T-cell (primary cell): ENCODE measurements at regions of chr16 and their contacts with region 1.

Region 1: DNA sequence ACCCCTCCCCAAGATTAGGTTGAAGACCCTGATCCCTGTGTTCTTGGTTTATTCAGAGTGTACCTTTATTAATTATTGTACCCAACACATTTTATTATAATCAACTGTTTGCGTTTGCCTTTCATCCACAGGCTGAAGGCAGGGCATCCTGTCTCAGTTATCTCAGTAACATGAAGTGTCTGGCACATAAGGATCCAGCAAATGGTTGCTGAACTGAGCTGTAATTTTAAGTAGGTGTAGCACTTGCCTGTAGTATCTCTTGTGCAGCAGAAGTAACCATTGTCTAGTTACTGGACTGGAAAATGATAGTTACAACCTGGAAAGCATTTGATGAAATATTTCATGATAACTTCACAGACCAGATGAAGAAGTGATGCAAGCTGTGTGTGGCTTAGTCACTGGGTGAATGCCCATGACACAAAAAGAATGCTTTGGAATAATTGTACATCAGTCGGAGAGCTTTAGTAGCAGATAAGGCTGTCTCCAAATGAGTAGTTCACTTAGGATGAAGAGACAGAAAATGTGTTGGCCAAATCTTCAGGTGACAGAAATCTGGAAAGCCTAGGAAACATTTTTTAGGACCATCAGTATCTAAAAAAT is 56.6 kb downstream of the ESRP2 start:
- DNase-seq: no peak
- ATAC-seq: no peak
- H3K4me3 ChIP-seq: no peak overlapping the region
- H3K4me3 Mint-ChIP-seq: no peak overlapping the region
- H3K27ac ChIP-seq: no peak overlapping the region
- H3K27ac Mint-ChIP-seq: peak overlapping the region; percentile 5 to 37
- H3K4me1 ChIP-seq: no peaks in the 10 kb centered on the region
- H3K4me1 Mint-ChIP-seq: peaks cover 6 to 18% (median 14%) of the 10 kb centered on the region in 3 donors
- H3K27me3 ChIP-seq: no peaks in the 10 kb centered on the region
- H3K27me3 Mint-ChIP-seq: no peaks in the 10 kb centered on the region

Region 2: GRCh38 chr16:68214726-68215125 is 35.4 kb after region 1 on chr16:
- CTCF ChIA-PET with region 1: interaction called in 1 of 2 experiments, 4 read pairs
- POLR2A ChIA-PET with region 1: interaction called in 1 of 2 experiments, 20 read pairs
- DNase-seq: no peak
- ATAC-seq: no peak
- H3K4me3 ChIP-seq: no peak overlapping the region
- H3K4me3 Mint-ChIP-seq: no peak overlapping the region
- H3K27ac ChIP-seq: no peak overlapping the region
- H3K27ac Mint-ChIP-seq: peak overlapping the region; percentile 83 to 84
- H3K4me1 ChIP-seq: peaks cover 6 to 19% of the 10 kb centered on the region in 2 experiments
- H3K4me1 Mint-ChIP-seq: peaks cover 32 to 53% (median 48%) of the 10 kb centered on the region in 3 donors
- H3K27me3 ChIP-seq: no peaks in the 10 kb centered on the region
- H3K27me3 Mint-ChIP-seq: no peaks in the 10 kb centered on the region